ENCODE measurements at regions of chr17 and their contacts with region 1.

Region 1: GRCh38 chr17:38868817-38869525 is 887 bp upstream of the LASP1 start:
- DNase-seq: peak; percentile 90
- ATAC-seq: peak; percentile 52
- H3K4me3 ChIP-seq: peak overlapping the region; percentile 98 to 99 (median 99)
- H3K27ac ChIP-seq: peak overlapping the region; percentile 88
- H3K4me1 ChIP-seq: peaks cover 41% of the 10 kb centered on the region
- H3K27me3 ChIP-seq: peaks cover 0 to 2% of the 10 kb centered on the region in 2 experiments; a peak in 2 of 5 replicates
- CTCF ChIP-seq: peak; percentile 77
- EP300 ChIP-seq: peak in 1 of 2 experiments; percentile 35; a peak in 1 of 4 replicates
- POLR2A ChIP-seq: peak; percentile 18 to 47; a peak in 2 of 4 replicates
- RAD21 ChIP-seq: no peak

Region 2: GRCh38 chr17:38799378-38800236 is 69.4 kb before region 1 on chr17 and contains the start of gene PIP4K2B:
- CTCF ChIA-PET with region 1: no interaction called
- POLR2A ChIA-PET with region 1: interaction called, 8 read pairs
- in situ Hi-C with region 1: no loop called
- intact Hi-C with region 1: loop called (anchors 1 kb)
- DNase-seq: peak; percentile 98
- ATAC-seq: peak; percentile 92
- H3K4me3 ChIP-seq: peak within 1 kb of the TSS; percentile 76 to 98 (median 90)
- H3K27ac ChIP-seq: peak within 1 kb of the TSS; percentile 99
- H3K4me1 ChIP-seq: peaks cover 39% of the 10 kb centered on the region
- H3K27me3 ChIP-seq: no peaks in the 10 kb centered on the region
- CTCF ChIP-seq: 0 out of 2 replicates have a peak, but pooled peaks have one; percentile 12
- EP300 ChIP-seq: peak in 1 of 2 experiments; percentile 9; a peak in 2 of 4 replicates
- POLR2A ChIP-seq: peak in 1 of 2 experiments; percentile 79; a peak in 3 of 4 replicates
- RAD21 ChIP-seq: peak; percentile 61
- total RNA-seq, gene PIP4K2B: 54.0 and 63.6 TPM in 2 replicates

Region 3: DNA sequence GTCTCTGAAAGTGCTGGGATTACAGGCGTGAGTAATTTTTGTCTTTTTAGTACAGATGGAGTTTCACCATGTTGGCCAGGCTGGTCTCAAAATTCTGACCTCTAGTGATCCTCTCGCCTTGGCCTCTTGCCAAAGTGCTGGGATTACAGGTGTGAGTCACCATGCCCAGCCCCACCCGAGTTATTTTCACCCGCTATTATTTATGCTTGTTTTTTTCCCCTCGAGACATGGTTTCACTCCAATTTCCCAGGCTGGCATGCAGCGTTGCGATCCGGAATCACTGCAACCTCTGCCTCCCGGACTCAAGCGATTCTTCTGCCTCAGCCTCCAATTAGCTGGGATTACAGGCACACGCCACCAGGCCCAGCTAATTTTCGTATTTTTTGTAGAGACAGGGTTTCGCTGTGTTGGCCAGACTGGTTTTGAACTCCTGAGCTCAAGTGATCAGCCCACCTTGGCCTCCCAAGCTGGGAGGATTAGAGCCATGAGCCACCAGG is 24.7 kb before region 1 on chr17:
- CTCF ChIA-PET with region 1: no interaction called
- POLR2A ChIA-PET with region 1: interaction called, 58 read pairs
- in situ Hi-C with region 1: no loop called
- intact Hi-C with region 1: no loop called
- DNase-seq: peak; percentile 51
- ATAC-seq: peak; percentile 23
- H3K4me3 ChIP-seq: peak overlapping the region in 2 of 3 experiments; percentile 13 to 30; a peak in 2 of 6 replicates
- H3K27ac ChIP-seq: peak overlapping the region; percentile 52
- H3K4me1 ChIP-seq: peaks cover 40% of the 10 kb centered on the region
- H3K27me3 ChIP-seq: no peaks in the 10 kb centered on the region
- CTCF ChIP-seq: no peak
- EP300 ChIP-seq: peak in 1 of 2 experiments; percentile 8; a peak in 1 of 4 replicates
- POLR2A ChIP-seq: no peak
- RAD21 ChIP-seq: no peak

Region 4: GRCh38 chr17:38879878-38880682 is 11.1 kb after region 1 on chr17:
- CTCF ChIA-PET with region 1: no interaction called
- POLR2A ChIA-PET with region 1: interaction called, 24 read pairs
- in situ Hi-C with region 1: no loop called
- intact Hi-C with region 1: no loop called
- DNase-seq: no peak
- ATAC-seq: no peak
- H3K4me3 ChIP-seq: no peak overlapping the region
- H3K27ac ChIP-seq: no peak overlapping the region
- H3K4me1 ChIP-seq: peaks cover 74% of the 10 kb centered on the region
- H3K27me3 ChIP-seq: no peaks in the 10 kb centered on the region
- CTCF ChIP-seq: no peak
- EP300 ChIP-seq: no peak
- POLR2A ChIP-seq: no peak
- RAD21 ChIP-seq: no peak

Region 5: DNA sequence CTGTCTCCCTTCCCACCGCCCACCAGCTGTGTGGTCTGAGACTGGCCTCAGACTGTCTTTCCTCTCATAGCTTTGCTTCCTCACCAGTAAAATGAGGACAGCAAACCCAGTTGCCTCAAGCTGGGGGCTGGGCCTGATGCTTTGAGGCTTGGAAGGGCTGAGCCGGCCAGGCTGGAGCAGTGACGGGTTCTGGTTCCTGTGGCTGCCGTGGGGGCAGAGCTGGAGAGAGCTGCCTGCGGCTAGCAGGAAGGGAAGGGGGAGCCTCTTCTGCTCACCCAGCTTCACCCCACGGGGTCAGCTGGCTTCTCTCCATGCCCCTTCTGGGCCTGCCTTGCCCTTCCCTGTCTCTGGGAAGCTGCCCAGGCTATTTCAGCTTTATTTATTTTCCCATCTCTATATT is 24.6 kb after region 1 on chr17:
- CTCF ChIA-PET with region 1: no interaction called
- POLR2A ChIA-PET with region 1: interaction called, 19 read pairs
- in situ Hi-C with region 1: no loop called
- intact Hi-C with region 1: no loop called
- DNase-seq: no peak
- ATAC-seq: no peak; the same call in 2 of the 3 replicates
- H3K4me3 ChIP-seq: no peak overlapping the region
- H3K27ac ChIP-seq: peak overlapping the region; percentile 5
- H3K4me1 ChIP-seq: peaks cover 28% of the 10 kb centered on the region
- H3K27me3 ChIP-seq: no peaks in the 10 kb centered on the region
- CTCF ChIP-seq: no peak
- EP300 ChIP-seq: no peak
- POLR2A ChIP-seq: no peak
- RAD21 ChIP-seq: no peak

Region 6: GRCh38 chr17:38922538-38923297 is 53.7 kb after region 1 on chr17:
- CTCF ChIA-PET with region 1: no interaction called
- POLR2A ChIA-PET with region 1: interaction called, 112 read pairs
- in situ Hi-C with region 1: no loop called
- intact Hi-C with region 1: loop called (anchors 5 kb)
- DNase-seq: no peak
- ATAC-seq: peak; percentile 56
- H3K4me3 ChIP-seq: no peak overlapping the region
- H3K27ac ChIP-seq: no peak overlapping the region
- H3K4me1 ChIP-seq: peaks cover 18% of the 10 kb centered on the region
- H3K27me3 ChIP-seq: no peaks in the 10 kb centered on the region
- CTCF ChIP-seq: no peak
- EP300 ChIP-seq: no peak
- POLR2A ChIP-seq: 0 out of 4 replicates have a peak, but pooled peaks of 1 of the 2 experiments have one; percentile 14
- RAD21 ChIP-seq: no peak

Region 7: DNA sequence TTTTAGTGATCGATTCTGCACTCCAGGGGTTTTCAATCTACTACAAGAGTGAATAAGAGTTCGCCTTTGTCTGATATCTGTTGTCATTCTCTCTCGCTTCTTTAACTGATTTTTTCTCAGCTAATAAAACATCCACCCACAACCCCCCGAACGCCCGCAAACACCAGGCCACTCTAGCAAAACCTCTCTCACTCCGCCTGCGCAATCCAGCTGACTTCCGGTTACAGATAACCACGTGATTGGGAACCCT is 330.8 kb after region 1 on chr17:
- CTCF ChIA-PET with region 1: no interaction called
- POLR2A ChIA-PET with region 1: interaction called, 10 read pairs
- in situ Hi-C with region 1: no loop called
- intact Hi-C with region 1: no loop called
- DNase-seq: peak; percentile 96
- ATAC-seq: peak; percentile 61
- H3K4me3 ChIP-seq: peak overlapping the region; percentile 65 to 92 (median 77)
- H3K27ac ChIP-seq: peak overlapping the region; percentile 97
- H3K4me1 ChIP-seq: peaks cover 59% of the 10 kb centered on the region
- H3K27me3 ChIP-seq: no peaks in the 10 kb centered on the region; a peak in 1 of 5 replicates
- CTCF ChIP-seq: no peak
- EP300 ChIP-seq: no peak
- POLR2A ChIP-seq: no peak; a peak in 2 of 4 replicates
- RAD21 ChIP-seq: no peak